ENCODE measurements at regions of chr4 and their contacts with region 1.

Region 1: DNA sequence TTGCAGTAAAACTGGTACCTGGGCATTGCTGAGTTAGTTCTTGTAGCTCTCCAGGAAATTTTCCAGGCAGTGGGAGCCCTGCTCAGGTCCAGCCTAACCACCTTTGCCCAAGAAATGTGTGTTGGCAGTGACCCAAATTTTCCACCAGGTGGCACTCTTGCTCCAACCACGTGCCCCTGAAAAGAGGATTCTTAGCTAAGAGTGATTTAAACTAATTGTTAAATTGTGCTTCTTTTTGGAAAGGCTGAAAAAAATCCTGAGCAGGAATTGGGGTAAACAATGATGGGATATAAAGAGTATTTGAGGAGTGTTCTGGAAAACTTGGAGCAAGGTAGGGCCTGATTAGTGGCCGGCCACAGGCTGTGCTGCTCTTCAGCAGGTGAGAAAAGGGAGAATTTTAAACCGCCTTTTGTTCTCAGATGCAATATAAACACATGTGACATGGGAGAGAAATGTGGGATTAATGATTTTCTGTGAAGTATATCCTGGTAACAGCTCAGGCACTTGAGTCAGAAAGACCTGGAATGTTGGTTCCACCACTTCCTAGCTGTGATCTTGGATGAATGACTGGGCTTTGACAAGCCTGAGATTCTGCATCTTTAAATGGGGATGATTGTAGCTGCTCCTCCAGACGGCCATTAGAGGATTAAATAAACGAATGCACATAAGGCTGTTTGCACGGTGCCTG is 219.6 kb downstream of the PTTG2 start:
- DNase-seq: peak; percentile 31 to 85 (median 64)
- ATAC-seq: peak; percentile 41 to 55 (median 46)
- H3K4me3 ChIP-seq: no peak overlapping the region
- H3K4me3 Mint-ChIP-seq: no peak overlapping the region
- H3K27ac ChIP-seq: no peak overlapping the region
- H3K27ac Mint-ChIP-seq: no peak overlapping the region
- H3K4me1 ChIP-seq: peaks cover 14 to 27% of the 10 kb centered on the region in 2 experiments
- H3K4me1 Mint-ChIP-seq: peaks cover 34 to 45% (median 41%) of the 10 kb centered on the region in 3 donors
- H3K27me3 ChIP-seq: no peaks in the 10 kb centered on the region
- H3K27me3 Mint-ChIP-seq: no peaks in the 10 kb centered on the region

Region 2: DNA sequence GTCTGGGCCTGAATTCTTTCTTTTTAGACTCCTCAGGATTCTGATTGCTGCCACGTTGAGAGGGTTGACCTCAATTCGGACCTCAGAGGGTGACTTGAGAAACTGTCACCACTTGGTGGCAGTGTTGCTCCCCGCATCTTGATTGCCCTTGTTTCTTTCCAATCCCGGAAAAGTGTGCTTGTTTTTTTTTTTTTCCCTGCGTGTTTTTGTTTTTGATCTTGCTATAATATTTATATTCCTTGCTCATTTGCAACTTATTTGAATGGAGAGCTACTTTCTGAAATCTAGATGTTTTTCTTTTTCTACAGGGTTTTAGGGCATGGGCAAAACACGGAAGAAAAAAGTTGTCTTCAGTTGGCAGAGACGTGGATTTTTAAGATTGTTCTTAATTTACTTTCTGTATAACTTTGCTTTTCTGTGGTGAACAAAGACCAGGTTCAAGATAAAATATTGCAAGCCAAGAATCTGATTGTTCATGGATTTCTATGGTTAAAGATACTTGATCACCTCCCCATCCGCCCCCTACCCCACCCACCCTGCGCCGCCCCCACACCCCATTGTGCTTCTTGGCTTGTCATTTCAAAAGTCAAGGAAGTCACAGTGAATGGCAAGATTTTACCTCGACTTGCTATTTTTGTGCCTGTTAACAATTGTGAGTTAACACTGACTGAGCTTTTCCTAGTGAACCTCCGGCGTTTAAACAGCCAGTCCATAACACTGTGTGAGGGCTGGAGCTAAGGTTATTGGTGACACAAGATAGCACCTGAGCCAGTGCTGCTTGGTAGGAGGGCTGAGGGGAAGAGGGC is 117.5 kb before region 1 on chr4:
- CTCF ChIA-PET with region 1: interaction called, 6 to 9 read pairs
- POLR2A ChIA-PET with region 1: interaction called in 1 of 2 experiments, 11 read pairs
- DNase-seq: peak; percentile 9 to 82 (median 48)
- ATAC-seq: peak; percentile 55 to 76 (median 65)
- H3K4me3 ChIP-seq: peak overlapping the region; percentile 26 to 39
- H3K4me3 Mint-ChIP-seq: peak overlapping the region; percentile 85 to 87 (median 86)
- H3K27ac ChIP-seq: no peak overlapping the region
- H3K27ac Mint-ChIP-seq: peak overlapping the region; percentile 70 to 81
- H3K4me1 ChIP-seq: peaks cover 0 to 7% of the 10 kb centered on the region in 2 experiments
- H3K4me1 Mint-ChIP-seq: peaks cover 14 to 16% (median 15%) of the 10 kb centered on the region in 3 donors
- H3K27me3 ChIP-seq: no peaks in the 10 kb centered on the region
- H3K27me3 Mint-ChIP-seq: no peaks in the 10 kb centered on the region

Region 3: GRCh38 chr4:38266616-38267015 is 86.8 kb after region 1 on chr4:
- CTCF ChIA-PET with region 1: no interaction called
- POLR2A ChIA-PET with region 1: no interaction called
- DNase-seq: no peak
- ATAC-seq: no peak
- H3K4me3 ChIP-seq: no peak overlapping the region
- H3K4me3 Mint-ChIP-seq: no peak overlapping the region
- H3K27ac ChIP-seq: no peak overlapping the region
- H3K27ac Mint-ChIP-seq: no peak overlapping the region
- H3K4me1 ChIP-seq: no peaks in the 10 kb centered on the region
- H3K4me1 Mint-ChIP-seq: no peaks in the 10 kb centered on the region
- H3K27me3 ChIP-seq: no peaks in the 10 kb centered on the region
- H3K27me3 Mint-ChIP-seq: peaks cover 0 to 1% of the 10 kb centered on the region in 2 donors

Region 4: GRCh38 chr4:38319456-38320342 is 139.9 kb after region 1 on chr4:
- CTCF ChIA-PET with region 1: interaction called in 1 of 2 experiments, 21 read pairs
- POLR2A ChIA-PET with region 1: no interaction called
- DNase-seq: peak; percentile 60 to 97 (median 84)
- ATAC-seq: peak; percentile 73 to 86 (median 79)
- H3K4me3 ChIP-seq: peak overlapping the region; percentile 50 to 65
- H3K4me3 Mint-ChIP-seq: peak overlapping the region; percentile 71 to 83 (median 79)
- H3K27ac ChIP-seq: peak overlapping the region; percentile 69
- H3K27ac Mint-ChIP-seq: peak overlapping the region; percentile 95
- H3K4me1 ChIP-seq: peaks cover 26 to 34% of the 10 kb centered on the region in 2 experiments
- H3K4me1 Mint-ChIP-seq: peaks cover 45 to 74% (median 57%) of the 10 kb centered on the region in 3 donors
- H3K27me3 ChIP-seq: no peaks in the 10 kb centered on the region
- H3K27me3 Mint-ChIP-seq: no peaks in the 10 kb centered on the region

Region 5: GRCh38 chr4:38730830-38731646 is 551.2 kb after region 1 on chr4:
- CTCF ChIA-PET with region 1: interaction called, 43 to 46 read pairs
- POLR2A ChIA-PET with region 1: no interaction called
- DNase-seq: peak; percentile 23 to 89 (median 75)
- ATAC-seq: peak; percentile 72 to 83 (median 78)
- H3K4me3 ChIP-seq: no peak overlapping the region
- H3K4me3 Mint-ChIP-seq: no peak overlapping the region
- H3K27ac ChIP-seq: no peak overlapping the region
- H3K27ac Mint-ChIP-seq: no peak overlapping the region
- H3K4me1 ChIP-seq: peaks cover 4 to 22% of the 10 kb centered on the region in 2 experiments
- H3K4me1 Mint-ChIP-seq: peaks cover 15 to 18% (median 15%) of the 10 kb centered on the region in 3 donors
- H3K27me3 ChIP-seq: no peaks in the 10 kb centered on the region
- H3K27me3 Mint-ChIP-seq: no peaks in the 10 kb centered on the region

Region 6: DNA sequence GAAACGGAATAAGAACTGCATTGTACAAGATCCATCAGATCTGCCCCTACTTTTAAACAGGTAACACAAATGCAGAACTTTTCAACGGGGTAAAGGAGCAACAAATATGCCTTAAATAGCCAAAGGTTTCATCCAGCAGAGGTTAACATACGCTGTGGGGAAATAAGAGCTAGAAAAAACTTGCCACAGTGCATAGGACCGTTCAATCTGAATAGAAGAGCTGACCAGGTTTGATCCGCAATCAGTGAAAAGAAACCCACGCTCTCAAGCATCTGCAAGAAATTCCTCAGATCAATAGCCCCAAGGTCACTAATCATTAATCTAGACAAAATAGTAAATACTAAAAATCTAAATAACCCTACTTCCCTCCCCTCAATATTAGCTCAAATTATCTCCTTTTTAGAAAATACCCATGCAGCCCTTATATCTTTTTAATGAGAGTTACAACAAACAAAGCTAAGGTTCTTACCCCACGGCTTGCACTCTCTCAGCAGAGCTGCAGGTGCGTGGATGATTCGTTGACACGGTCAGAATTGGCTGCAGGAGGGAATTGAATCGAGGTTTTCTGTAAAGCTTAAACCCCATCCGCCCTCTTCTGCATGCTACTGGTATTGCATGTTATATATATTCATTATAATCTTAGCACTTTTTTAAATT is 602.7 kb after region 1 on chr4 and contains the start of gene TLR10:
- CTCF ChIA-PET with region 1: interaction called, 3 to 35 read pairs
- POLR2A ChIA-PET with region 1: no interaction called
- DNase-seq: peak in 13 of 35 experiments; percentile 18 to 73 (median 28)
- ATAC-seq: peak; percentile 51 to 73 (median 64)
- H3K4me3 ChIP-seq: no peak within 1 kb of the TSS
- H3K4me3 Mint-ChIP-seq: peak within 1 kb of the TSS in 1 of 3 donors; percentile 71
- H3K27ac ChIP-seq: no peak within 1 kb of the TSS
- H3K27ac Mint-ChIP-seq: peak within 1 kb of the TSS in 1 of 2 donors; percentile 44
- H3K4me1 ChIP-seq: peaks cover 0 to 2% of the 10 kb centered on the region in 2 experiments
- H3K4me1 Mint-ChIP-seq: peaks cover 3 to 6% (median 5%) of the 10 kb centered on the region in 3 donors
- H3K27me3 ChIP-seq: no peaks in the 10 kb centered on the region
- H3K27me3 Mint-ChIP-seq: no peaks in the 10 kb centered on the region
- total RNA-seq, gene TLR10: 0.47 to 2.6 (median 0.96) TPM